WTC11 (cell line): ENCODE measurements at regions of chr17 and their contacts with region 1.

Region 1: DNA sequence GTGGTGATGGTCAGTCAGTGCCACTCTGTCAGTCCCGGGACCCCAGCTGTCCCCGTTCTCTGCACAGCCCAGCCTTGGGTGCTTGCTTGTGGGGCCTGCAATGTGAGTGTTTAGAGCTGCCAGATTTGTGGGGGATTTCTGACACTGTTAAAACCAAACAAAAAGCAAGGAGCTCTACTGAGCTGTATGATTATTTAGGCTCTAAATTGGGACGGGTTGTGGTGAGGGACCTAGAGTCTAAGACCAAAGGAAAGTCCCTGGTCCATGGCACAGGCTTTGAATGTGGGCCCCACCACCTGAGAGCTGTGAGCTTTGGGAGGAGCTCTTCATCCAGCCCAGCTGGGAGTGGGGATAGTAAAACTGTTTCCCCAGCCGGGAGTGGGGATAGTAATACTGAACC is 63.3 kb downstream of the KSR1 start:
- DNase-seq: no peak
- ATAC-seq: peak; percentile 33
- H3K4me3 Mint-ChIP-seq: no peak overlapping the region
- H3K27ac Mint-ChIP-seq: peak overlapping the region; percentile 62
- H3K4me1 Mint-ChIP-seq: peaks cover 78% of the 10 kb centered on the region
- H3K27me3 Mint-ChIP-seq: no peaks in the 10 kb centered on the region
- CTCF ChIP-seq: no peak

Region 2: DNA sequence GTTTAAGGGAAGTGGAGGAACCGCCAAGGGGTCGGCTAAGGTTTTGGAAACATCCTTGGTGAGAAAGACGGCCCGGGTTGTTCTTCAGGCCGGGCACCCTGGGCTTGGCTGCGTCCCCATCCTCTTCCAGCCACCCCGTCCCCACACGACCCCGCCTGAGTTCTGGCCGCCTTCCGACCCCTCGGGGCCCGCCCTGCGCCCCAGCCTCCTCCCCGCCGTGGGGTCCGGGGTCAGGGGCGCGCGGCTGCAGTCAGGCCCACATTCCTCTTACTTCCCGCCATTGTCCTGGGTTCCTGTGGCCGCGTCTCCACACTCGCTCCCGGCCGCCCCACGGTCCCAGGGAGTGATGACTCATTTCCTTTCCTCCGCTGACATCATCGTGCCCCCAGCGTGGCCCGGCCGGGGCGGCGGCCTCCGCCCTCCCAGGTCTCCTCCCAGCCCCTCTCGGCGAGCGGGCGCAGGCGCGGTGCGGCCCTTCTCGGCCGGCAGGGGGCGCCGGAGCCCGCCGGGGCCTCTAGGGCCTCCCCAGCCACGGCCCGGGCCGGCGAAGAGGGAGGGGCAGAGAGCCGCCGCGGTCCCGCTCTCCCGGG is 166.0 kb before region 1 on chr17:
- CTCF ChIA-PET with region 1: no interaction called
- POLR2A ChIA-PET with region 1: no interaction called
- DNase-seq: peak; percentile 85
- ATAC-seq: peak; percentile 62
- H3K4me3 Mint-ChIP-seq: peak overlapping the region; percentile 81
- H3K27ac Mint-ChIP-seq: peak overlapping the region; percentile 88
- H3K4me1 Mint-ChIP-seq: peaks cover 20% of the 10 kb centered on the region
- H3K27me3 Mint-ChIP-seq: peaks cover 9% of the 10 kb centered on the region; the same call in 1 of the 2 replicates
- CTCF ChIP-seq: peak; percentile 89

Region 3: DNA sequence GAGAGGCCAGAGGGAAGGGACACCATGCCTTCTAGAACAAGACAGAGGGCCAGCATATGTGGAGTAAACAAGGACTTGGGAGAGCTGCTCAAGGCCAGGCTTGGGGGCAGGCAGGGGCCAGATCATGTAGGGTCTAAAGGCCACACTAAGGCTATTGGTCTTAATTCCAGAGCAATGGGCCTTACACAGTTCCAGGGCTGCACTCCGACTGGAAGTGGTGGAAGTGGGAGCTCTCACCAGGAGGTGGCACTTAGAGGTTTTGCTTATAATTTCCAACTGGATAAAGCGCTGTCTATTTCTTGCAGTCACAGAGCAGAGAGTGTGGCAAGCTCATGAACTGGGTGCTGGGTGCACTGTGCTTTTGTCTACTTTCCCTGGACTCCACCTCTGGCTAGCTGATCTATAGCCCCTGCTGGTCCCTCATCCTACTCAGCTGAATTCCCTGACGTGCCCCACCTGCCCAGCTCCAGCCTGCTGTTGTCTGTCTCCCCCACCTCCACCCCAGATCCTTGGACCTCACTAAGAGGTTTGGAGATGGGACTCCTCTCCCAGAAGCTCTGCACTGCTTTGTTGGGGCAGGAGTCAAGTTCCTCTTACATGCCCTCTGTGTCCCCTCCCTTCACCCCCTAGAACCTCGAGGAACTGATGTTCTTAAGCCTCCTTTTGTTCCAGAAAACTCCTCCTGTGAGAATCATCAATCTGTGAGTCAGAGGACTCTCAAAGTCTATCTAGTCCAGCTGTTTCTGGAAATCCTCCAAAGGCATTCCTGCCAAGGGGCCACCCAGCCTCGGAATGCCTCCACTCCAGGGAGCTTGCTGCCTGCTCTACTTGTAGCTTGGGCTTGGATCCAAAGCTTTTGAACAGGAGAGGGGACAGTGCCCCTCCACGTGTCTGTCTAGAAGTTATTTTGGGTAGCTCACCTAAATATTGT is 111.4 kb before region 1 on chr17:
- CTCF ChIA-PET with region 1: no interaction called
- POLR2A ChIA-PET with region 1: no interaction called
- DNase-seq: no peak
- ATAC-seq: no peak
- H3K4me3 Mint-ChIP-seq: no peak overlapping the region
- H3K27ac Mint-ChIP-seq: no peak overlapping the region
- H3K4me1 Mint-ChIP-seq: peaks cover 8% of the 10 kb centered on the region
- H3K27me3 Mint-ChIP-seq: peaks cover 3% of the 10 kb centered on the region; the same call in 1 of the 2 replicates
- CTCF ChIP-seq: no peak

Region 4: DNA sequence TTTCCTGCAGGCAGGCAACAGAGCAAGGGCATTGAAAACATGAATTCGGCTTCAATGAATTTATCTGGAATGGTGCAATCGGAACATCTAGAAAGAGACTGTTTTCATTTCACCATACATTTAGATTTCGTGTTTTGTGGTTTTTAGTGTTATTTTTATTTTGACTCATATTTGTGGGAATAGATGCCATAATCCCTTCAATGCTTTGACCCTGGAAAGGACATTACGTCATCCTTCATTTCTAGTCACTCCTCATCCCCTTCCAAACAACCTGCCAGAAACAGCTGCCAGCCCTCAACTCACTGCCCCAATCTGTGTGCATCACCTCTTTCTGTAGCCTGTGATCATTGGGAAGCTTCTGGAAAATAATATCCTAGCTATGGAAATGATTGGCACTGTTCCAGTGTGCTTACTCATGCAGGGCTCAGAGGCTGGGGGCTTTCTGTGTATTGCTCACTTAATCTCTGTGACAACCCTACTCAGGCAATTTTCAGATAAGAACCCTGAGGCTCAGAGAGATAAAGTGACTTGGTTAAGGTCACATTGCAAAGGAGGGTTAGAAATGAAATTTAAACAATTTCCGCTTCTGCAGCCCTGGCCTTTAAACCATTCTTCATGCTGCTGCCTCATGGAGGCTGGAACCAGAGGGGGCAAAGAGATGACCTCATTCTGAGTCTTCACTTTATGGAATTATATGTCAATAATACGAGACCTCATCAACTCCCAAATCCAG is 72.8 kb before region 1 on chr17:
- CTCF ChIA-PET with region 1: no interaction called
- POLR2A ChIA-PET with region 1: no interaction called
- DNase-seq: no peak
- ATAC-seq: no peak
- H3K4me3 Mint-ChIP-seq: no peak overlapping the region
- H3K27ac Mint-ChIP-seq: no peak overlapping the region
- H3K4me1 Mint-ChIP-seq: no peaks in the 10 kb centered on the region
- H3K27me3 Mint-ChIP-seq: no peaks in the 10 kb centered on the region
- CTCF ChIP-seq: no peak

Region 5: GRCh38 chr17:27533856-27534815 is 14.6 kb after region 1 on chr17:
- CTCF ChIA-PET with region 1: interaction called, 15 read pairs
- POLR2A ChIA-PET with region 1: no interaction called
- DNase-seq: peak; percentile 36
- ATAC-seq: peak; percentile 70
- H3K4me3 Mint-ChIP-seq: no peak overlapping the region
- H3K27ac Mint-ChIP-seq: no peak overlapping the region
- H3K4me1 Mint-ChIP-seq: peaks cover 56% of the 10 kb centered on the region
- H3K27me3 Mint-ChIP-seq: no peaks in the 10 kb centered on the region
- CTCF ChIP-seq: no peak